AG04449 (cell line): ENCODE measurements at regions of chr12 and their contacts with region 1.

Region 1: DNA sequence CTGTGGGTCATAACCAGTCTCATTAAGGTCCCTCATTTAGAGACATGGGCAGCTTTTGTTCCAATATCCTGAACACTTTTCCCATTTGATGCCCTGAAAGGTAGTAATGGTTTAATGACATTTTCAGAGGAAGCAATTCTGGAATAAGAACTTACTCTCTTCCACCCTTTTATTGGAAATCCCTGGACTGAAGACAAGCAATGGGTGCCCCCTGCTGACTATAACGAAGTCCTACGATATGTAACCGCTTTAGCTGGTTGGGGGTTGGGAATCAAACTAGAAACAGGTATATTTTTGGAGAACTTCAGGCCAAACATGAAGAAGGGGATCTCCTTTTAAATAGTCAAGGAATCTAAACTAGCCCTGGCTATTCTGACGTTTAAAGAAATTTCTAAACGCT is 20.5 kb downstream of the SARNP start:
- DNase-seq: no peak
- H3K4me3 ChIP-seq: no peak overlapping the region
- CTCF ChIP-seq: peak; percentile 54

Region 2: GRCh38 chr12:55780685-55781084 is 16.4 kb before region 1 on chr12:
- CTCF ChIA-PET with region 1: interaction called, 23 read pairs
- POLR2A ChIA-PET with region 1: no interaction called
- DNase-seq: peak; percentile 7
- H3K4me3 ChIP-seq: no peak overlapping the region
- CTCF ChIP-seq: no peak

Region 3: GRCh38 chr12:55812088-55812487 is 15.0 kb after region 1 on chr12:
- CTCF ChIA-PET with region 1: interaction called, 28 read pairs
- POLR2A ChIA-PET with region 1: no interaction called
- DNase-seq: no peak
- H3K4me3 ChIP-seq: no peak overlapping the region
- CTCF ChIP-seq: no peak